Sciatic nerve (tissue), 2 donors: ENCODE measurements at regions of chr5 and their contacts with region 1.

Region 1: GRCh38 chr5:76402886-76403765 is at the start of gene IQGAP2:
- DNase-seq: peak; percentile 84
- ATAC-seq: peak; percentile 87
- total RNA-seq, gene IQGAP2: 57.5 TPM

Region 2: GRCh38 chr5:76372323-76373054 is 30.6 kb before region 1 on chr5:
- intact Hi-C with region 1: no loop called
- DNase-seq: no peak
- ATAC-seq: no peak

Region 3: GRCh38 chr5:76544268-76544926 is 141.3 kb after region 1 on chr5:
- intact Hi-C with region 1: loop called (anchors 10 kb)
- DNase-seq: no peak
- ATAC-seq: peak; percentile 53